ENCODE measurements at regions of chr1 and their contacts with region 1.

Region 1: DNA sequence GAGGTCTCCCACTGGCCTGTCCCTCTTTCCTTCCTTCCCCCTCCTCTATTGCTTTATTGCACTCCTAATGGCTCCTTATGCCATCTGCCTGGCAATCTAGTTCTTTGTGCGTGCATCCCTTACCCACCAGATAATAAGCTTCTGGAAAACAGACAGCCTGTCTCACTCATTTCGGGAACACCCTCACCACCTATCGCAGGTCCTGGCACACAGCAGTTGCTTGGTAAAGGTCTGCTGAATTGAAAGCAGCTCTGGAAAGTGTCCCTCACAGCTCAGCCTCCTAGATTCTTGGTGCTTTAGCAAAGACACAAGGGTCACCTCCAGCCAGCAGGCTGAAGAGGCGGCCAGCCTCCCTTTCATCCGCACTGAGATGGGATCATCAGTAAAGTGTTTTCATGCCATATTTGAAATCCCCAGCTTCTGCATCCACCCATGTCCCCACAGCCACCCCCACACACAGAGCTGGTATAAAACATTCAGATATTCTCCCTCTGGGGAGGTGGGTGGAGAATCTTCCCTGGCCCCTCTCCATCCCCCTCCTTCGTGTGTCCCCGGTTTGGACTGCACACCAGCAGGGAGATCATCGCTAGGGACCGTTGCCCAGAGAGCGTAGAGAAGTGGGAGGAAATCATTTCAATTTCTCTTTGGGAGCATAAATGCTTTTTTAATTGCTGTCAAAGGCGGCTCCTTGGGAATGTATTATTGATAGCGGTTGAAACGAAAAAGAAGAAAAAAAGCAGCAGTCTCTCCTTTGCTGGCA is 29.1 kb upstream of the ATP2B4 start:
- DNase-seq: peak; percentile 53
- ATAC-seq: peak; percentile 74 to 77

Region 2: GRCh38 chr1:203558064-203558760 is 39.3 kb before region 1 on chr1:
- intact Hi-C with region 1: loop called in 1 of 2 experiments (anchors 5 kb)
- DNase-seq: peak; percentile 69
- ATAC-seq: peak; percentile 69 to 78

Measured in left cardiac atrium (tissue), 4 donors.